Endothelial cell of umbilical vein (primary cell): ENCODE measurements at regions of chr13 and their contacts with region 1.

Region 1: GRCh38 chr13:99436686-99437416 is 64.4 kb upstream of the TM9SF2 start:
- DNase-seq: peak; percentile 84
- H3K4me3 ChIP-seq: no peak overlapping the region
- H3K27ac ChIP-seq: no peak overlapping the region
- H3K4me1 ChIP-seq: peaks cover 9% of the 10 kb centered on the region
- H3K27me3 ChIP-seq: peaks cover 13 to 29% of the 10 kb centered on the region in 2 experiments
- CTCF ChIP-seq: peak; percentile 100
- POLR2A ChIP-seq: no peak

Region 2: DNA sequence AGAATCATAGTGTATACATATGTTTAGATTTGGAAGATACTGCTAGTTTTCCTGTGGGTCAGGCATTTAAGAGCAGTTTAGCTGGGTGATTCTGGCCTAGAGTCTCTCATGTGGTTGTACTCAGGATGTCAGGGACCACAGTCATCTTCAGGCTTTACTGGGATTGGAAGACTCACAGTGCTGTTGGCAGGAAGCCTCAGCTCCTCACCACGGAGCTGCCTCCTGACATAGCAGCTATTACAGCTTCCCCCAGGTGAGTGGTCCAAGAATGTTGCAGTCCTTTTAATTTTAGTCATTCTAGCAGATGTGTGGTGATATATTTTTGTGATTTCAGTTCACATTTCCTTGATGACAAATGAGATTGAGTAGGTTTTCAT is 161.8 kb before region 1 on chr13:
- CTCF ChIA-PET with region 1: interaction called, 289 read pairs
- POLR2A ChIA-PET with region 1: no interaction called
- dilution Hi-C with region 1: no loop called
- intact Hi-C with region 1: no loop called
- DNase-seq: no peak
- H3K4me3 ChIP-seq: no peak overlapping the region
- H3K27ac ChIP-seq: no peak overlapping the region
- H3K4me1 ChIP-seq: no peaks in the 10 kb centered on the region
- H3K27me3 ChIP-seq: no peaks in the 10 kb centered on the region
- CTCF ChIP-seq: no peak
- POLR2A ChIP-seq: no peak

Region 3: DNA sequence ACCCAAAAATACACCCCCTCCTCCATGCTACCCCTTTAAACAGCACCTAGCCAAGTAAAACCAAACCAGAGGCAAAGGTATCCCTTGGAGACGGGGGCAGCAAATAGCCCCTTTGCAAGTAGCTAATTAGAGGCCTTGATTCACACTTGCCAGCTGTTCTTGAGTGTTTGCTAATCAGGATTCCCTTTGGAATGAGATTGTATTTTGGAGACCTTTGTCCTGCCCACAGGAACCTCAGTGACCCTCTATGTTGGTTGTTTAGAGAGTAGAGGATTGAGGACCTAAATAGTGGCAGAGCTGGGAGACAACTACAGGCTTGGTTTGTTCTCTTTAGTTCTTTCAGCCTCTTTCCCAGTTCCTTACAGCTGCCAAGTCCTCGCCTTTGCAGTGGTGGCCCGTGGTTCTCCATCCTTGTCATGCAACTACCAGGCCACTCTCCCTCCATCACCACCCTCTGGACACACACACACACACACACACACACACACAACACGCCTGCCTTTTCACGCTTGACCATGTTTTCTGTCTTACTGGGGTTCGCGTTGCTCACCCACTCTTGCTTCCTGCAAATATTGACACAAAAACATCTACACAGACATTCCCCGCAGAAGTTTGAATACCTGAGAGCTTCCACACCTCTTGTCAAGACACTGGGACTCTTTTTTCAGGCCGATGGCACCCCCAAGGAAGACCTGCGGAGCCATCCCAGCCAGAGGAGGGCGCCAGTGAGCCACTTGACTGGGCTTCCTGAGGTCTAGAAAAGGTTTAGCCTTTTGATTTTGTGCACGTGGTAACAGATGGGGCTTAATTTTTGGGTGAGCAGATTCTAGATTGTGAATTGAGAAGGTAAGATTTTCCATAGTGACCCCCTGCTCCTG is 49.7 kb before region 1 on chr13:
- CTCF ChIA-PET with region 1: interaction called, 25 read pairs
- POLR2A ChIA-PET with region 1: no interaction called
- dilution Hi-C with region 1: no loop called
- intact Hi-C with region 1: loop called (anchors 1 kb)
- DNase-seq: peak; percentile 33
- H3K4me3 ChIP-seq: no peak overlapping the region
- H3K27ac ChIP-seq: no peak overlapping the region
- H3K4me1 ChIP-seq: no peaks in the 10 kb centered on the region
- H3K27me3 ChIP-seq: no peaks in the 10 kb centered on the region
- CTCF ChIP-seq: peak; percentile 74 to 86
- POLR2A ChIP-seq: no peak

Region 4: DNA sequence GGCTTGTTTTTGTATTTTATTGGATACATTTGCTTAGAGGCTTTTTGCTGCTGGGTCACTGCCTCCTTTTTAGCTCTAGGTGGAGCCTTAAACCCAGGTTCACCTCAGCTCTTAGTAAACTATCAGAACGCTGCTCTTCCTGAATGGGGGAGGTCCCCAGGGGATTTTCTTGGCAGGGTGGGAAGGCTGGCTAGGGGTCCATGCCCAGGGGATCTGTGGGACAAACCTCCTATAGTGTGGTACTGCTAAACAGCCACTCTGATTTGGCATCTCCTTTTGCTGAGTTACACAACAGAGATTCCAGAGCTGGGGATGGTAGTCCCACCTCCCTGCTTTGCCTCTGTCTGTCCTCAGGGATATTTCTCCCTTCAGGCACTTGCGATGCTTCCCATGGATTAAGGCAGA is 329.8 kb after region 1 on chr13:
- CTCF ChIA-PET with region 1: no interaction called
- POLR2A ChIA-PET with region 1: no interaction called
- dilution Hi-C with region 1: no loop called
- intact Hi-C with region 1: no loop called
- DNase-seq: no peak
- H3K4me3 ChIP-seq: no peak overlapping the region
- H3K27ac ChIP-seq: no peak overlapping the region
- H3K4me1 ChIP-seq: no peaks in the 10 kb centered on the region
- H3K27me3 ChIP-seq: no peaks in the 10 kb centered on the region
- CTCF ChIP-seq: no peak
- POLR2A ChIP-seq: no peak